Activated B cell treated with CpG ODN at 0.5 μM for 24 hours (primary cell): ENCODE measurements at regions of chr6 and their contacts with region 1.

Region 1: GRCh38 chr6:37819177-37819823 is at the start of gene ZFAND3:
- DNase-seq: peak; percentile 95
- ATAC-seq: peak; percentile 81
- H3K4me3 Mint-ChIP-seq: peak within 1 kb of the TSS; percentile 98
- H3K27ac Mint-ChIP-seq: peak within 1 kb of the TSS; percentile 99
- H3K4me1 Mint-ChIP-seq: peaks cover 51% of the 10 kb centered on the region
- H3K27me3 Mint-ChIP-seq: no peaks in the 10 kb centered on the region
- CTCF ChIP-seq: no peak
- total RNA-seq, gene ZFAND3: 56.3 and 60.1 TPM in 2 replicates

Region 2: DNA sequence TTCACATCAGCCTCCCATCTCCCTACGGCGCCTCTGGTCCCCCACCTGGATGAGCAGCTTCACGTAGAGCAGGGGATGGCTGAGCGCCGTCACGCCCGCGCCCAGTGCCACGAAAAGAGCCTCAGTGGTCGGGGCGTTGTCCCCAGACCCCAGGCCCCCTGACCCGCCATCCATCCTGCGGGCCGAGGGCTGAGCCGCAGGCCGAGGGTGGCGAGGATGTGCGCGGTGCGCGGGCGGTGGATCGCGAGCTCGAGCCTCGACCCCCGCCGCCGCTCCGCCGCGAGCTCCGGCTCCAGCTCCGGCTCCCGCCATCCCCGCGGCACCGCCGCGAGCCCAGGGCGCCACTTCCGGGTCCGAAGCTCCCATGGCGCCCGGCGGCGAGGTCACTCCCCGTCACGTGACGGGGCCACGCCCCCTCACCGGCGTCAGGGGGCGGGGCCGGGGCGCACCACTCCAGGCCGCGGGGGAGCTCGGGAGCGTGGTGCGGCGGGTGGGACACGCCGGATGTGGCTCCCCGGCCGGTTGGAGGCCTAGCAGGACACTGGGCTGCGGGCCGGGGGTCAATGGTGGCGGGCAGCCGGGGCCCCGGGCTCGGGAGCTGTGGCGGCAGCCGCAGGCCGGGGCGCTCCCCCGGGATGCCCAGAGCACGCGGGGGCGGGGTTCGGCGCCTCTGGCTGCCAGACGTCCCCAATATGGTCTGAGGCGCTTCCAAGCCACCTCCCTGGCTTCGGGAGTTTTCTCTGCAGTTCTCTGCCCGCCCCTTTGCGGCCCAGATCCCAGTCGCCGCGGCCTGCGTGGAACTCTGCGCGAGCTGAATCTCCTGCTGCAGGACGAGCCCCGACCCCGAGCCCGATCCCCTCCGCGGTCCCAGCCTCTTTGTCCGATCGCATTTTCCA is 833.2 kb before region 1 on chr6 and contains the start of gene MTCH1:
- CTCF ChIA-PET with region 1: no interaction called
- POLR2A ChIA-PET with region 1: interaction called, 7 read pairs
- intact Hi-C with region 1: loop called (anchors 5 kb)
- DNase-seq: peak; percentile 96
- ATAC-seq: peak; percentile 87
- H3K4me3 Mint-ChIP-seq: peak within 1 kb of the TSS; percentile 96
- H3K27ac Mint-ChIP-seq: peak within 1 kb of the TSS; percentile 91
- H3K4me1 Mint-ChIP-seq: peaks cover 20% of the 10 kb centered on the region
- H3K27me3 Mint-ChIP-seq: no peaks in the 10 kb centered on the region
- CTCF ChIP-seq: no peak
- total RNA-seq, gene MTCH1: 128 and 133 TPM in 2 replicates

Region 3: DNA sequence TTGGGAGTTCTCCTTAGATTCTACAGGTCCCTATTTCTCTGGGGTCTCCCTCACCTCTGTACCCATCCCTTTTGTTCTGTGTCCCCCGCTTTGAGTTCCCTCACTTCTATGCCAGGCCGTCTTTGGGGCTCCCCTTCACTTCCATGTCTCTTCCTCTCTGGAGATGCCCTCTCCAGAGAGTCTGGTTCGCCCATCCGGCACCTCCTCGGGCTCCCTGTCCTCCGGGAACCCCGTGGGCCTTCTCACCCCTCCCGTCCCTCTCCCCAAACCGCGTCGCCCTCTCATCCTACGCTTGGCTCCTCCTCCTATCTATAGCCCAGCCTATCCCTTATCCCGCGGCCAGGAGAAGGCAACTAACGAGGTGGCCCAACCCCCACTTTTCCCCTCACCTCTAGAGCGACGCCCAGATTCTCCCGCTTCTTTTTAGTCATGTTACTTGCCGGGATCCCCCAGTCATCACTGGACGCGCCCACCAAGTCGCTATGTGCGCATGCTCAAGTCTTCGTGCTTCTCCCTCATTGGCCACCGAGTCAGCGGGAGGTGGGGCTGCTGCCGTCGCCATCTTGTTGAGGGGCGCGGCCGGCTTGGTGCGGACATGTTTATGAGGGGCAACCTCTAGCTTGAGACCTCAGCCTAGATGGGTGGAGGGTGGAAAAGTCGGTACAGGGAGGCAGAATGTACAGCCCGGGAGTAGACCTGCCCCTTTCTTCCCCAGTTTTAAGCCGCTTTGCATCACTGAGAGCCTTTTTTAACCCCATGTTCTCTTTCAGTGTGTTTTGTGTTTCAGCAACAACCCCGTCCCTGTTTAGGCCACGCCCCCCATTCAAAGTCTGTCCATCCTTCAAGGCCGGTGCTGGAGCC is 319.6 kb before region 1 on chr6 and contains the start of gene CCDC167:
- CTCF ChIA-PET with region 1: no interaction called
- POLR2A ChIA-PET with region 1: interaction called, 3 read pairs
- intact Hi-C with region 1: loop called (anchors 1 kb)
- DNase-seq: peak; percentile 86
- ATAC-seq: peak; percentile 96
- H3K4me3 Mint-ChIP-seq: peak within 1 kb of the TSS; percentile 96
- H3K27ac Mint-ChIP-seq: peak within 1 kb of the TSS; percentile 82
- H3K4me1 Mint-ChIP-seq: peaks cover 65% of the 10 kb centered on the region
- H3K27me3 Mint-ChIP-seq: no peaks in the 10 kb centered on the region
- CTCF ChIP-seq: no peak
- total RNA-seq, gene CCDC167: 18.4 and 25.9 TPM in 2 replicates

Region 4: GRCh38 chr6:37698261-37699137 is 120.8 kb before region 1 on chr6:
- CTCF ChIA-PET with region 1: no interaction called
- POLR2A ChIA-PET with region 1: interaction called, 10 read pairs
- intact Hi-C with region 1: loop called (anchors 1 kb)
- DNase-seq: peak; percentile 58
- ATAC-seq: peak; percentile 41
- H3K4me3 Mint-ChIP-seq: peak overlapping the region; percentile 97
- H3K27ac Mint-ChIP-seq: peak overlapping the region; percentile 93
- H3K4me1 Mint-ChIP-seq: peaks cover 19% of the 10 kb centered on the region
- H3K27me3 Mint-ChIP-seq: peaks cover 15% of the 10 kb centered on the region
- CTCF ChIP-seq: no peak

Region 5: GRCh38 chr6:37830225-37830624 is 10.9 kb after region 1 on chr6:
- CTCF ChIA-PET with region 1: no interaction called
- POLR2A ChIA-PET with region 1: interaction called, 15 read pairs
- intact Hi-C with region 1: no loop called
- DNase-seq: no peak
- ATAC-seq: peak; percentile 76
- H3K4me3 Mint-ChIP-seq: no peak overlapping the region
- H3K27ac Mint-ChIP-seq: no peak overlapping the region
- H3K4me1 Mint-ChIP-seq: peaks cover 70% of the 10 kb centered on the region
- H3K27me3 Mint-ChIP-seq: no peaks in the 10 kb centered on the region
- CTCF ChIP-seq: no peak

Region 6: DNA sequence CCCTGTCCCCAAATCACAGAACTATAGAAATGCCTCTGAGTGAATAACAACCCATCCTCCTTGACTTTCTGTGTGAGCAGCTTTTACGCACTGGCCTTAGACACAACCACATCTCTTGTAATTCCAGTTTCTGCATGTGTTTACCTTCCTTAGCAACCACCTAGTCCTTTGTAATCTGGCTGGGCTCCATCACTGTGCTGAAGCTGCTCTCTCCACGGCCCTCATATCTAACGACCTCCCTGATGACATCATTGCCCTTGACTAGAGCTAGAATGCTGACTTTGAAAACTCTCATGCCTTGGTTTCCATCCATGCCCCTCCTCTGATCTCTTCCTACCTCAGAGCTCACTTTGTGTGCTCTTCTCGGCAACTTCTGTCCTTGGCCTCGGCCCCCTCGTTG is 1198.8 kb after region 1 on chr6:
- CTCF ChIA-PET with region 1: no interaction called
- POLR2A ChIA-PET with region 1: no interaction called
- intact Hi-C with region 1: no loop called
- DNase-seq: no peak
- ATAC-seq: no peak
- H3K4me3 Mint-ChIP-seq: no peak overlapping the region
- H3K27ac Mint-ChIP-seq: no peak overlapping the region
- H3K4me1 Mint-ChIP-seq: no peaks in the 10 kb centered on the region
- H3K27me3 Mint-ChIP-seq: peaks cover 3% of the 10 kb centered on the region
- CTCF ChIP-seq: no peak